Body of pancreas (tissue), 4 donors: ENCODE measurements at regions of chr7 and their contacts with region 1.

Region 1: DNA sequence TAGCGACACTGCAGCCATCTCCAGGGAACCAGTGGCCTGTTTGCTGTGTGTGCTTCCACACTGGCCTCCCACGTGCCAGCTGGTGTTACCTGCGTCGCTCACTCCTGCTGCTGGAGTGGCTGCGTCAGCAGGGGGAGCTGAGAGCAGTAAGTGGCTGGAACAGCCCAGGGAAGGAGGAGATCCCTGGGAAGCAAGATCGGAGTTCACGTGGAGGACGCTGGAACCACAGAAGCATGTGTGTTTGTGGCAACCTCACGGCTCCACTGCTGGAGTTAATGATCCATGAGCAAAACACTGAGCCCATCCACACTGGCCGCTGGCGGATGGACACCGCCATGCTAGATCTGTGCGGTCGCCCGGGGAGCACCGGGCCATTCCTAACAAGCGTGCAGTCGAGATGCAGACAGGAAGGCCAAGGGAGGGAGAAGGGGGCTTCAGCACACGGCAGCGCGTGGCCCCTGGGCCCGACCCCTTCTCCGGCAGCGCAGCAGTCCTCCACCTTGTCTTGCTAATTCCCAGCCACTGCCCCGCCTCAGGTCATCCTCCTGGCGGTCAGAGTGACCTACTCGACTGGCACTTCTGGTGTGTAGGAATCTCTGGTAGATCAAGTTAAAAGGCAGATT is 68.5 kb upstream of the EEPD1 start:
- DNase-seq: peak; percentile 86 to 91 (median 88)
- ATAC-seq: peak; percentile 98
- H3K4me3 ChIP-seq: no peak overlapping the region
- H3K27ac ChIP-seq: no peak overlapping the region
- H3K4me1 ChIP-seq: peaks cover 20% of the 10 kb centered on the region
- H3K27me3 ChIP-seq: no peaks in the 10 kb centered on the region
- CTCF ChIP-seq: peak; percentile 20 to 88 (median 71)
- POLR2A ChIP-seq: no peak

Region 2: GRCh38 chr7:35753761-35754603 is 330.6 kb before region 1 on chr7:
- intact Hi-C with region 1: no loop called
- DNase-seq: peak in 2 of 4 donors; percentile 14 to 51
- ATAC-seq: peak; percentile 56
- H3K4me3 ChIP-seq: no peak overlapping the region
- H3K27ac ChIP-seq: peak overlapping the region in 1 of 4 donors; percentile 10
- H3K4me1 ChIP-seq: no peaks in the 10 kb centered on the region
- H3K27me3 ChIP-seq: no peaks in the 10 kb centered on the region
- CTCF ChIP-seq: no peak
- POLR2A ChIP-seq: no peak

Region 3: DNA sequence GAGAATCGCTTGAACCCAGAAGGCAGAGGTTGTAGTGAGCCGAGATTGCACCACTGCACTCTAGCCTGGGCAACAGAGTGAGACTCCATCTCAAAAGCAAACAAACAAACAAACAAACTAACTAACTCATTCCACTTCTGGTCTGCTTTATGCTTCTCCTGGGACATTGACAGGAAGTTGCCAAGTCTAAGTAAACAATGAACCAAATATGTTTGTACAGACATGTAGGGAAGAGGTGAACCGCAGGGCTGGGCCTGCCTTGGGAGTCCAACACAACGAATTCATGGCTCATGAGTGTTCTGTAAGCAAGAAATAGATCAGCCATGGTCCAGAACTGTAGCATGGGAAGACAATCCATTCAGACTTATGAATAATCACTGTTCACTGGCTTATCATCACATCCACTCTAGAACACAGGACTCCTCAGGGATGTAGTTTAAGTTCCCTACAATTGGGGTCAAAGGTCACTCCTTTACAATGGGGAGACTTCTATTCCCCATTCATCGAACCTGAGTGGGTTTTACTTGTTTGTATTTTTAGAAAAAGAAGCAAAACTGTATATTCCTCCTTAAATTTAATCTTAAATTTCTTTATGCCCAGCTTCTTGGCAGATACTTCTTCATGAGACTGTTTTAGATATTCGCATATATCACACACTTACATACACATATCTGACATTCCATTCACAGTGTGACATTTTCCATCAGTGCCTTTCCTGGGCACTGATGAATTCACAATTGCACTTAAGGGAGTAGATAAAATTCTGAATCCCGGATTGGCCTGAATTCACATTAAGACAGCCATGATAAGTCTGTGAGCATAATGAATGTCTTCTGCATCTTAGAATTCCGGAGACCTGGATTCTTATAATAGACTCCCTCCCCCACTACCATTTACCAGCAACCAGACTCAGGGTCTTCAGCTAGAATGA is 90.6 kb before region 1 on chr7:
- intact Hi-C with region 1: loop called (anchors 5 kb)
- DNase-seq: no peak
- ATAC-seq: no peak
- H3K4me3 ChIP-seq: no peak overlapping the region
- H3K27ac ChIP-seq: no peak overlapping the region
- H3K4me1 ChIP-seq: peaks cover 14% of the 10 kb centered on the region
- H3K27me3 ChIP-seq: no peaks in the 10 kb centered on the region
- CTCF ChIP-seq: no peak
- POLR2A ChIP-seq: no peak